Activated CD4-positive, alpha-beta T cell treated with anti-CD3 and anti-CD28 coated beads for 36 hours (primary cell): ENCODE measurements at regions of chr1 and their contacts with region 1.

Region 1: GRCh38 chr1:111222308-111223125 is 5.0 kb upstream of the CHI3L2 start:
- DNase-seq: peak; percentile 91
- ATAC-seq: peak; percentile 24
- H3K4me3 Mint-ChIP-seq: peak overlapping the region; percentile 62
- H3K27ac Mint-ChIP-seq: peak overlapping the region; percentile 88
- H3K4me1 Mint-ChIP-seq: peaks cover 93% of the 10 kb centered on the region
- H3K27me3 Mint-ChIP-seq: no peaks in the 10 kb centered on the region

Region 2: DNA sequence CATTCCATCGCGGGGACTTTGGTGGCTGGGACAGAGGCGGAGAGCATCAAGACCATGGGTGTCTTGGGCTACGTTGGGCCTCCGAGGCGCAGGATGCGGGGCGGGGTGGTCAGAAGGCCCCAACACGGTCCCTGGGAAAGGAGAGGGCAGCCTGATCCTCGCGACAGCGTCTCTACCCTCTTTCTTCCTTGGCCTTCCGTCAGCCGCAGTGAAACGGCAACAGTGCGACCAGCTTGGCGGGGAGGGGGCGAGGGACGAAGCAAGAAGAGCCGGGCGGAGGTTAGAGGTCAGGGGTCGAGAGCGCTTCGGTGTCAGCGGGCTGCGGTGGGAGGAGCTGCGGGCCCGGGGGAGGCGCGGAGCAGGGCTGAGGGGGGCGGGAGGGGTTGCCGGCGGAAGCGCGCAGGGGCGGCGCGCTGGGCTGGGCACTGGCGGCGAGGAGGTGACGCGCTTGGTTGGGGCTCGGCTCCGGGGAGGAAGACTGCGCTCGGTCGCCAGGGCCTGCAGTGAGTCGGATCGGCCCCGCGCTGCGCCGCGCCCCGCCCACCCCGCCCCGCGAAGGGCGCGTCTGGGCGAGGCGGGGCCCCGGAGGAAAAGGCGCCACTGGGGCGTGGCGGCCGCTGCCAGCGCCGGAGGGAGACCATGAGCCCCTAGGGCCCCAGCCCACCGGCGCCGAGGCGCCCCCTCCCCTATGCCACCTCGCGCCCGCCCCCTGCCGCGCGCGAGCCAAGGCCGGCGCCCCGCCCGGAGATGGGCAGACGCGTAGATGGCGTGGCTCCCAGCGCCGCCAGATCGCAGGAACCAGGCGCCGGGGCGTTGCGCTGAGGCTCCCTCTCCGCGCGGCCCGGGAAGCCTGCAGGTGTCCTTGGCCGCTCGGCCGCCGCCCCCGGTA is 1012.6 kb before region 1 on chr1 and contains the start of gene KCNC4:
- CTCF ChIA-PET with region 1: no interaction called
- POLR2A ChIA-PET with region 1: no interaction called
- intact Hi-C with region 1: loop called (anchors 5 to 10 kb)
- DNase-seq: peak; percentile 95
- ATAC-seq: peak; percentile 88
- H3K4me3 Mint-ChIP-seq: peak within 1 kb of the TSS; percentile 82
- H3K27ac Mint-ChIP-seq: peak within 1 kb of the TSS; percentile 81
- H3K4me1 Mint-ChIP-seq: peaks cover 49% of the 10 kb centered on the region
- H3K27me3 Mint-ChIP-seq: no peaks in the 10 kb centered on the region
- total RNA-seq, gene KCNC4: 13.9 to 14.3 TPM

Region 3: GRCh38 chr1:110674337-110675059 is 548.0 kb before region 1 on chr1 and contains the start of gene KCNA3:
- CTCF ChIA-PET with region 1: no interaction called
- POLR2A ChIA-PET with region 1: no interaction called
- intact Hi-C with region 1: loop called in 1 of 2 experiments (anchors 5 kb)
- DNase-seq: peak; percentile 74
- ATAC-seq: peak; percentile 9
- H3K4me3 Mint-ChIP-seq: peak within 1 kb of the TSS; percentile 99
- H3K27ac Mint-ChIP-seq: peak within 1 kb of the TSS; percentile 99
- H3K4me1 Mint-ChIP-seq: peaks cover 34% of the 10 kb centered on the region
- H3K27me3 Mint-ChIP-seq: no peaks in the 10 kb centered on the region
- total RNA-seq, gene KCNA3: 20.0 to 20.5 TPM

Region 4: DNA sequence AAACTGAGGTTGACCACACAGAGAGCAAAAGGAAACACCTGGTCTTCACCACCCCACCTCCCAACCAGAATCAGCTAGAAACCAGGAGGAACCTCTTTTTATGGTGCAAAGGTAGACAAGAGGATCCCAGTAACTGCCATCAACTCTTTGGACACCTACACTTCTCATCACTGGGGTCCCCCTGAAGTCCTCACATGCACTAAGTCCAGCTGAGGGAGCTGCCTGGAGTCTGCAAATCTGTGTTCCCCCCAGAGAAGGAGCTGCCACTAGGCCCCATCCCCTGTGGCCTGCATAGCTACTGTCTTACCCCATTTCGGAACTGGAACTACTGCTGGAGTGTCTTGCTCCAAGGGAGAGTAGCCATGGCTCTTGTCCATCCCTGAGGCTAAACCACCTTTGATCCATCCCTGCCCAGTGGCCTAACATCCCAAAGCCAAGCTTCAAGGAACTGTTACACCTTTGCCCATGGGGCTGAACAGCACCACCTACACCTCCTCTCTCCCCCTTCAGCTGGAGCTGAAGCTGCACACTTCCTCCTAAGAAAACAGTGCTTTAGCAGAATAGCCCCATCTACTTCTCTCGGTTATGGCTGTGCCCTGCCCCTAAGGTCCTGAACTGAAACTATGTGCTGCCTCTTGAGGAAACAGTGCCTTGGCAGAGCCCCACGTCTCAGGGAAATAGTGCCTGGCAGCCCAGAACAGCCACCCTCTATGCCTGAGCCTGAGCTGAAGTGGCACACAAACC is 435.0 kb before region 1 on chr1:
- CTCF ChIA-PET with region 1: no interaction called
- POLR2A ChIA-PET with region 1: no interaction called
- intact Hi-C with region 1: no loop called
- DNase-seq: peak; percentile 33
- ATAC-seq: peak; percentile 35
- H3K4me3 Mint-ChIP-seq: peak overlapping the region; percentile 9
- H3K27ac Mint-ChIP-seq: peak overlapping the region; percentile 87
- H3K4me1 Mint-ChIP-seq: peaks cover 60% of the 10 kb centered on the region
- H3K27me3 Mint-ChIP-seq: no peaks in the 10 kb centered on the region

Region 5: GRCh38 chr1:111030590-111030989 is 191.9 kb before region 1 on chr1:
- CTCF ChIA-PET with region 1: interaction called, 4 read pairs
- POLR2A ChIA-PET with region 1: no interaction called
- intact Hi-C with region 1: loop called in 1 of 2 experiments (anchors 5 kb)
- DNase-seq: peak; percentile 69
- ATAC-seq: peak; percentile 80
- H3K4me3 Mint-ChIP-seq: no peak overlapping the region
- H3K27ac Mint-ChIP-seq: no peak overlapping the region
- H3K4me1 Mint-ChIP-seq: no peaks in the 10 kb centered on the region
- H3K27me3 Mint-ChIP-seq: peaks cover 5% of the 10 kb centered on the region

Region 6: GRCh38 chr1:111176678-111177077 is 45.8 kb before region 1 on chr1:
- CTCF ChIA-PET with region 1: no interaction called
- POLR2A ChIA-PET with region 1: no interaction called
- intact Hi-C with region 1: no loop called
- DNase-seq: no peak
- ATAC-seq: no peak
- H3K4me3 Mint-ChIP-seq: no peak overlapping the region
- H3K27ac Mint-ChIP-seq: no peak overlapping the region
- H3K4me1 Mint-ChIP-seq: peaks cover 48% of the 10 kb centered on the region
- H3K27me3 Mint-ChIP-seq: no peaks in the 10 kb centered on the region

Region 7: DNA sequence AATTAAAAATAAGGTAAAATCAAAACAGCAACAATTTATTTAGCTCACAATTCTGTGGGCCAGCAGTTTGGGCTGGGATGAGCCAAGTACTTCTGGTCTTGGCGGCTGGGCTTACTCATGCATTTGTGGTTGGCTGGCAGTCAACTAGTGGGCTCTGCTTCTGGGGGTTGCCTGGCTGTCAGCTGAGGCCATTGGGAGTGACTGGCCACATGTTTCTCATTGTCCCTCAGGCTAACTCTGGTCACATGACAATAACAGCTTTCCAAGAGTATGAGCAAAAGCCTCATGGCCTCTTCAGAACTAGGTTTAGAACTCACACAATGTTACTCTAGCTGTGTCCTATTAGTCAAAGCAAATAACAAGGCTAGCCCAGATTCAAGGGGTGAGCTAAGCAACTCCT is 52.6 kb after region 1 on chr1:
- CTCF ChIA-PET with region 1: interaction called, 6 read pairs
- POLR2A ChIA-PET with region 1: interaction called, 4 read pairs
- intact Hi-C with region 1: loop called in 1 of 2 experiments (anchors 2 kb)
- DNase-seq: peak; percentile 63
- ATAC-seq: peak; percentile 74
- H3K4me3 Mint-ChIP-seq: no peak overlapping the region
- H3K27ac Mint-ChIP-seq: peak overlapping the region; percentile 51
- H3K4me1 Mint-ChIP-seq: peaks cover 39% of the 10 kb centered on the region
- H3K27me3 Mint-ChIP-seq: peaks cover 25% of the 10 kb centered on the region

Region 8: DNA sequence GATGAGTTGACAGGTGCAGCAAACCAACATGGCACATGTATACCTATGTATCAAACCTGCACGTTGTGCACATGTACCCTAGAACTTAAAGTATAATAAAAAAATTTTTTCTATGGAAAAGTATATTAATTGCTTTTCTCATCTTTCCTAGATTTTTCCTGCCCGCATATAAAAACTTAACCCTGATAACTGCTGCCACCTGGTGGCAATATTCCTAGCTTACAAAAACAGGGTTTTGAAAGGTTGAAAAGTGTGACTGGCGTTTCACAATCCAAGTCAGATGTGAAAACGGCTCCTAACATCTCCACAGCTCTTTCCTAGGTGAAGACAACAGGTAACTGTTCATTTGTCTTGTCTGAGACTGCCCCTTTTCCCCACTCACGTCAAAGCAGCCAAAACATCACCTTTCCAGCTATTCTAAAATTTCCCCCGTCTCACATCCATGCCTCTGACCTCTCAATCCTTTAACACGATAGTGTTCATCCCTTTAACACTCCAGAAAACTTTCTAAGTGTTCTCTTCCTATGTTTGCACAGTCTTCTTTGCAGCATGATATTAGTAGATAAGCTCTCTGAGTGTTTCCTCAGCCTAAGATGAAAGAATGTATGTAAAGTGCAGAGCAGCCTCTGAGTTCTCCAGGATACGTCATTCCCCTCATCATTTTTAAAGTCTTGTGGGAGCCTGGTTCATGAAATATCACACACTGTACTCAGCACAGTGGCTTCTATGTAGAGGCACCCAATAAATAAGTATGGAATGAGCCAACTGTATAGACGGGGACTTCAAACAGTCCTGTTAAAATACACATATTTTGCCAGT is 177.5 kb after region 1 on chr1:
- CTCF ChIA-PET with region 1: interaction called, 27 read pairs
- POLR2A ChIA-PET with region 1: no interaction called
- intact Hi-C with region 1: loop called (anchors 1 kb)
- DNase-seq: peak; percentile 65
- ATAC-seq: no peak
- H3K4me3 Mint-ChIP-seq: no peak overlapping the region
- H3K27ac Mint-ChIP-seq: no peak overlapping the region
- H3K4me1 Mint-ChIP-seq: peaks cover 34% of the 10 kb centered on the region
- H3K27me3 Mint-ChIP-seq: no peaks in the 10 kb centered on the region

Region 9: GRCh38 chr1:111603979-111604378 is 381.5 kb after region 1 on chr1:
- CTCF ChIA-PET with region 1: no interaction called
- POLR2A ChIA-PET with region 1: no interaction called
- intact Hi-C with region 1: loop called (anchors 2 to 5 kb)
- DNase-seq: peak; percentile 89
- ATAC-seq: peak; percentile 81
- H3K4me3 Mint-ChIP-seq: peak overlapping the region; percentile 40
- H3K27ac Mint-ChIP-seq: peak overlapping the region; percentile 96
- H3K4me1 Mint-ChIP-seq: peaks cover 77% of the 10 kb centered on the region
- H3K27me3 Mint-ChIP-seq: no peaks in the 10 kb centered on the region

Region 10: GRCh38 chr1:111672331-111672730 is 449.8 kb after region 1 on chr1:
- CTCF ChIA-PET with region 1: no interaction called
- POLR2A ChIA-PET with region 1: no interaction called
- intact Hi-C with region 1: no loop called
- DNase-seq: no peak
- ATAC-seq: no peak
- H3K4me3 Mint-ChIP-seq: no peak overlapping the region
- H3K27ac Mint-ChIP-seq: no peak overlapping the region
- H3K4me1 Mint-ChIP-seq: peaks cover 63% of the 10 kb centered on the region
- H3K27me3 Mint-ChIP-seq: no peaks in the 10 kb centered on the region

Region 11: GRCh38 chr1:111739194-111739924 is 516.8 kb after region 1 on chr1 and contains the start of gene INKA2:
- CTCF ChIA-PET with region 1: no interaction called
- POLR2A ChIA-PET with region 1: no interaction called
- intact Hi-C with region 1: no loop called
- DNase-seq: peak; percentile 89
- ATAC-seq: peak; percentile 87
- H3K4me3 Mint-ChIP-seq: peak within 1 kb of the TSS; percentile 80
- H3K27ac Mint-ChIP-seq: peak within 1 kb of the TSS; percentile 11
- H3K4me1 Mint-ChIP-seq: peaks cover 15% of the 10 kb centered on the region
- H3K27me3 Mint-ChIP-seq: peaks cover 32% of the 10 kb centered on the region
- total RNA-seq, gene INKA2: 0.25 to 0.49 TPM